GM10248 (cell line): ENCODE measurements at regions of chr10 and their contacts with region 1.

Region 1: GRCh38 chr10:50503661-50504320 is 120.0 kb downstream of the SGMS1 start:
- DNase-seq: no peak
- CTCF ChIP-seq: no peak

Region 2: DNA sequence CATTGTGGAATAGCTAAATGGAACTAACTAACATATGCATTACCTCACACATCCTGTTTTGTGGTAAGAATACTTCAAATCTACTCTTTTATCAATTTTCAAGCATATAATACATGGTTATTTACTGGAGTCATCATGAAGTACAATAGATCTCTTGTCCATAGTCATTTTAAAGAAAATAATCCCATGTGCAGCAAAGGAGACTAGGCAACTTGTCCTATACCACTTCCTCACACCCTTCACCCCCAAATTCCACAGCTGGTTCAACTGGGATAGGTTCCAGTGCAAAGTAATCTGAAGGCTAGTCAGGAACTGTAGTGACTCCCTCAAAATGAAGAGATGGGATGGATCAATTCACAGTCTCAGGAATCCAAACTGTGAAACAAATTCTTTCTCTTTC is 56.1 kb before region 1 on chr10:
- CTCF ChIA-PET with region 1: no interaction called
- POLR2A ChIA-PET with region 1: no interaction called
- DNase-seq: no peak
- CTCF ChIP-seq: no peak

Region 3: GRCh38 chr10:50490241-50490640 is 13.6 kb before region 1 on chr10:
- CTCF ChIA-PET with region 1: interaction called, 11 read pairs
- POLR2A ChIA-PET with region 1: no interaction called
- DNase-seq: no peak
- CTCF ChIP-seq: no peak

Region 4: DNA sequence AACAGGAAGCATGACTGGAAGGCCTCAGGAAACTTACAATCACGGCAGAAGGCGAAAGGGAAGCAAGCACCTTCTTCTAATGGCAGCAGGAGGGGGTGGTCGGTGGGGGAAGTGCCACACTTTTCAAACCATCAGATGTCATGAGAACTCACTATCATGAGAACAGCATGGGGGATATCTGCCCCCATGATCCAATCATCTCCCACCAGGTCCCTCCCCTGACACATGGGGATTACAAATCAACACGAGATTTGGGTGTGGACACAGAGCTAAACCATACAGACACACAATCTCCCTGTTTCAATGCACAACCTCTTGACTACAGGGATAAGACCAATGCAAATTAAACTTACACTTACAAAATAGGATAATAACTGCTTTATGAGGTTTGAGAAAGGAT is 22.4 kb after region 1 on chr10:
- CTCF ChIA-PET with region 1: no interaction called
- POLR2A ChIA-PET with region 1: no interaction called
- DNase-seq: no peak
- CTCF ChIP-seq: no peak

Region 5: DNA sequence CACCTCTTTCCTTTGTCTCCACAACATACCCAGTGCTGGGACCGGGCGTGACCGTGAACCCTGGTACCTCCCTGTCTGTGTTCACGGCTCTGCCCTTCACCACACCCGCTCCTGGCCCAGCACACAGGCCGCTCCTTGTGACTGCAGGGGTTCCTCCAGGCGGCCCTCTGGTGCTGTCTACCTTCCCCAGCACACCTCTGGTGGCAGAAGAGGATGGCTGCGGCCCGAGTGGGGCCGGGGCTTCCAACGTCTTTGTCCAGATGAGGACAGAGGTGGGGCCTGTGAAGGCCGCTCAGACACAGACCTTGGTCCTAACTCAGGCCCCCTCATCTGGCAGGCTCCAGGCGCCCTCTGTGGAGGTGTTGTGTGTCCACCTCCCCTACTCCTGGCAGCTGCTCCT is 175.4 kb after region 1 on chr10:
- CTCF ChIA-PET with region 1: no interaction called
- POLR2A ChIA-PET with region 1: no interaction called
- DNase-seq: no peak
- CTCF ChIP-seq: no peak